ENCODE measurements at regions of chr14 and their contacts with region 1.

Region 1: GRCh38 chr14:59707778-59708561 is 131.4 kb upstream of the CCDC175 start:
- DNase-seq: no peak
- H3K4me3 ChIP-seq: no peak overlapping the region
- H3K4me3 Mint-ChIP-seq: no peak overlapping the region
- H3K27ac Mint-ChIP-seq: no peak overlapping the region
- H3K4me1 ChIP-seq: no peaks in the 10 kb centered on the region
- H3K4me1 Mint-ChIP-seq: no peaks in the 10 kb centered on the region
- H3K27me3 ChIP-seq: no peaks in the 10 kb centered on the region
- H3K27me3 Mint-ChIP-seq: peaks cover 4% of the 10 kb centered on the region
- CTCF ChIP-seq: no peak

Region 2: GRCh38 chr14:59754256-59754655 is 46.3 kb after region 1 on chr14:
- CTCF ChIA-PET with region 1: no interaction called
- POLR2A ChIA-PET with region 1: no interaction called
- intact Hi-C with region 1: no loop called
- DNase-seq: no peak
- H3K4me3 ChIP-seq: no peak overlapping the region
- H3K4me3 Mint-ChIP-seq: no peak overlapping the region
- H3K27ac Mint-ChIP-seq: no peak overlapping the region
- H3K4me1 ChIP-seq: no peaks in the 10 kb centered on the region
- H3K4me1 Mint-ChIP-seq: no peaks in the 10 kb centered on the region
- H3K27me3 ChIP-seq: no peaks in the 10 kb centered on the region
- H3K27me3 Mint-ChIP-seq: peaks cover 6% of the 10 kb centered on the region
- CTCF ChIP-seq: no peak

Region 3: DNA sequence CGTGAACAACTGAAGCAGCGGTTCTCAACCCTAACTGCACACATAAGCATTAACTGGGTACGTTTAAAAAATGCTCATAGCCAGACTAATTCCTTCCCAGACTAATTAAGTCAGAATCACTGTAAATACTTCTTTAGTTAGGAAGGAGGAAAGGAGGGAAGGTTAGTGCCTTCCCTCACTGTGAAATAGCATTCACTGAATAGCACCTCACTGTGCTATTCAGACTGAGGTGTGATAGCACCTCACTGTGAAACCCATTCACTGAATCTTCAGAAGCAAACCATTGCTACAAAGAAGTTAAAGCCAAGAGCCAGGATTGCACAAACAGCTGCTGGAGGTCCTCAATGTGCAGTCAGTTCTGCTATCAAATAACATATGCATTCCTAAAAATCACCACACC is 103.8 kb after region 1 on chr14:
- CTCF ChIA-PET with region 1: no interaction called
- POLR2A ChIA-PET with region 1: no interaction called
- intact Hi-C with region 1: no loop called
- DNase-seq: no peak
- H3K4me3 ChIP-seq: no peak overlapping the region
- H3K4me3 Mint-ChIP-seq: no peak overlapping the region
- H3K27ac Mint-ChIP-seq: no peak overlapping the region
- H3K4me1 ChIP-seq: peaks cover 4% of the 10 kb centered on the region; the same call in 1 of the 2 replicates
- H3K4me1 Mint-ChIP-seq: peaks cover 7% of the 10 kb centered on the region
- H3K27me3 ChIP-seq: no peaks in the 10 kb centered on the region
- H3K27me3 Mint-ChIP-seq: peaks cover 5% of the 10 kb centered on the region
- CTCF ChIP-seq: no peak

Region 4: DNA sequence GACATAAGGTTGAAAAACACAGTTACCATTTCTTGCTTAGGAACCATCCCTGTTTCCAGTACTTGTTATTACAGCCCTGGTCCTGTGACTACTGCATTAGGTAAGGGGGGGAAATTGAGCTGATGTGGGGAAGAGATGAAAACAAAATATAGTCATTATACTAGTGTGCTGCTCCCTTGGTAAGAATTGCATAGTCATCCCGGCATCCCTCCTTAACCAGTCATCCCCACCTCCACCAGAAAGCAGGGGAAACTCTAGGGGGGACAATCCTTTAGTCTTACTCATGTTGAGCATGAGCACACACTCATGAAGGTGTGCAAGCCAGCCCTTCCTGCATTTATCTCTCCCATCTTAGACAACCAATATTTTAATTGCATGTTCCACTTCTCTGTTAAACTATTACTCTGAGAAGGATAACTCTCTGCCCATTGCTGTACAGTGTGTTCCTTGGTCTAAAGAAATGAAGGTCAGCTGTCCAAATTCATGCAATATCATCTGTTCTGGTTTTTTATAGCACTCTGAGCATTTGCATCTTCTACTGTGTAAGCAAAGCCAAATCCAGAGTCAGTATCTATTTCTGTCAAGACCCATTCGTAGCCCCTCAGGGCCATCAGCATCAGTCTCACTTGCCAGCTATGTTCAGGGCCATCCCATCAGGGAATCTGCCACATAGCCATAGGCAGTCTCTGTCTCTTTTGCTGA is 1526.4 kb after region 1 on chr14:
- CTCF ChIA-PET with region 1: no interaction called
- POLR2A ChIA-PET with region 1: interaction called, 12 read pairs
- intact Hi-C with region 1: no loop called
- DNase-seq: no peak
- H3K4me3 ChIP-seq: no peak overlapping the region
- H3K4me3 Mint-ChIP-seq: no peak overlapping the region
- H3K27ac Mint-ChIP-seq: no peak overlapping the region
- H3K4me1 ChIP-seq: no peaks in the 10 kb centered on the region
- H3K4me1 Mint-ChIP-seq: no peaks in the 10 kb centered on the region
- H3K27me3 ChIP-seq: no peaks in the 10 kb centered on the region
- H3K27me3 Mint-ChIP-seq: peaks cover 12% of the 10 kb centered on the region
- CTCF ChIP-seq: no peak

Measured in Caco-2 (cell line).